PC-9 (cell line): ENCODE measurements at regions of chr7 and their contacts with region 1.

Region 1: DNA sequence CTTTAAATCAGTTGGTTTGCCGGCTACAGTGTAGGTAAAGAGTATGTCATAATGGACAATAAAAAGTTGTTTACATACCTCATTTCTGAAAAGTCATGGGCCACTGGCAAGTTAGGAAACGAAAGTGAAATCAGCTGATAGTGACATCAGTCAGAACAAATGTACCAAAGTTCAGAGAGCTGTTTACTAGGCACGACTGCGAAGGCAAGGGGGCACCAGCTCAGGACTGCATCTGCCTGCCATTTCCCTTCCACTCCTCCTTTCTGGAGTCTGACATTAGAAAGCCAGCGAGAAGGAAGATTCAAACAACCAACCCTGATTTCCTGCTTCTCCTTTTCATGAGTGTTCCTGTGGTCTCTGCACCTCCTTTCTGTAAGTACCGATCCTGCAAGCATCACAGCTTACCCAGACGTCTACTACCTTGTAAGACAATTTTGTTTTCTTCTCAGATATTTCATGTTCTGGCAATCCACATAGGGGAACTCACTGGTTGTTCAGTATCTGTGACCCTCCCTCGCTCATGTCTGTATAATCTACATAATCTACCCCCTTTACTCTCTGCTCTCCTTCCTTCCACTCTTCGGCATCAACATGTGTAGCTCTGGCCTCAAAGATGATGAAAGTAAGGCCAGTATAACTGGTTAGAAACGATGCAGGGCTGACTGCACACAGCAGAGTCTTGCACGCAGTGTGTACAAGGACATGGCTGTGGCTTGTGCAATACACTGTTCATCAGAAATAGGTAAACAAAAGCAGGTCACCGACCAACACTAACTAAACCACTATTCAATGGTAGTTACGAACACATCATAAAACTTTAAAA is at the start of gene TMEM140:
- DNase-seq: peak; percentile 22 to 77
- H3K4me3 ChIP-seq: peak within 1 kb of the TSS; percentile 40; the same call in 1 of the 2 replicates
- H3K27ac ChIP-seq: peak within 1 kb of the TSS; percentile 32; the same call in 1 of the 2 replicates
- H3K4me1 ChIP-seq: peaks cover 6% of the 10 kb centered on the region; the same call in 1 of the 2 replicates
- H3K27me3 ChIP-seq: no peaks in the 10 kb centered on the region
- CTCF ChIP-seq: no peak
- total RNA-seq, gene TMEM140: 0.25 and 0.92 TPM in 2 replicates

Region 2: DNA sequence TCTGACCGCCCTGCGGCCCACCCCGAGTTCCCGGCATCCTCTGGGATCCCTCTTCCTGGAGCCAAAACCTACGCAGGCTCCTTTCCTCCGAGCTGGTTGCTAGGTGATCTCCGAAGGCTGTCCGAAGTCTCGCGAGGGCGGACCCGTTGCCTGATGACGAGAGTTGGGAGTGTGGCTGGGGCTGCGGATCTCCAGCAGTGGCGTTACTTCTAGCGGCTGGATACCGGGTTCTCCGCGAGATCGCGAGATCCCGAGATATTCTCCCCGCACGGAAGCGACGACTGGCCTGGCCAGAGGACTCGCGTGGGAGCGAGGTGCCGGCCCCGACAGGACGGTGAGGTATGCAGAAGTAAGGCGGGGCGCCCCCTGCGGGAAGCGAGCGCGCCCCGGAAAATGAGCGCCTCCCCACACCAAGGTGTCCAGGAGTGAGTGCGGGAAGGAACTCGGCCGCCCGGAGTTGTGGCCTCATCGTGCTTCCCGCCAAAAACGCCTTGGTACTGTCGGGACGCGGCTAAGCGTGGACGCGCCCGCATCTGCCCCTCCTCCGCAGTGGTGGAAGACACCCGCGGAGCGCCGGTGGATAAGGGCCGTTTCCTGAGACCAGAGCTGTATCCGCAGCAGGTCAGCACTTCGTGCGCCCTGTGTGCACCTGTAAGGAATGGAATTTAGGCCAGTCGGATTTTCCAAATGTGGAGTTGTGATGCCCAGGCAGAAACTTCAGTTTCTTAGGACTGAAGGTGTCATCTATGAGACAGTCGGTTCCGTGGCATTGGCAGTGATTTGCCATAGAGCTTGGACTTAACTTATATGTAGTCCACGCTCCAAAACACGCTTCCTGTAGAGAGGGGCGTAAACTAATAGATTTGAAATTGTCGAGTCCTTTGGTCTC is 161.5 kb before region 1 on chr7 and contains the start of gene AGBL3:
- CTCF ChIA-PET with region 1: no interaction called
- POLR2A ChIA-PET with region 1: no interaction called
- intact Hi-C with region 1: loop called (anchors 10 kb)
- DNase-seq: peak; percentile 88 to 96
- H3K4me3 ChIP-seq: peak within 1 kb of the TSS; percentile 75
- H3K27ac ChIP-seq: peak within 1 kb of the TSS; percentile 26
- H3K4me1 ChIP-seq: peaks cover 18% of the 10 kb centered on the region
- H3K27me3 ChIP-seq: no peaks in the 10 kb centered on the region
- CTCF ChIP-seq: peak; percentile 80
- total RNA-seq, gene AGBL3: 3.2 and 4.3 TPM in 2 replicates